Posterior cingulate gyrus (tissue), 11 donors: ENCODE measurements at regions of chr19 and their contacts with region 1.

Region 1: GRCh38 chr19:42450314-42450934 is 7.7 kb upstream of the CXCL17 start:
- DNase-seq: peak in 8 of 10 donors; percentile 18 to 92 (median 70)

Region 2: DNA sequence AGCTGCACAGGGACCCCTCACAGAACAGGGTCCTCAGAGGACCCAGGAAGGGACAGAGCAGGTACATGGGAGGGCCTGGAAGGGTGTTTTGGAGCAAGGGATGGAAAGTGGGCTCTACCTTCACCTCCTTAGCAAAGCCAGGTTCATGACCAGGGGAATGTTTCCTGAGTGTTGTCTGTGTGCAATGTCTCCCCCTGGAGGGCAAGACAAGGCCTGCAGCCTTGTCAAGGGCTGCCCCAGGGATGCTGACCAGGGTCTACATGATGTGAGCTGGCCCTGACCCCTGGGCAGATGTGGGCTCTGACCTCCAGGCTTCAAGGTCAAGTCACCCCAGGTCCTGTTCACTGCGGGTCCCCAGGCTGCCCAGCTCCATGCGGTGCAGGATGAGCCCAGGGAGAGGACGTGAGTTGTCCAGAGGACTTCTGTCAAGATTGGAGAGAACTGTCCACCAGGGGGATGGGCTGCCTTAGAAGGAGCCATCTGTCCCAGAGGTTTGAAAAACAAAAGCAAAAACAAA is 78.9 kb after region 1 on chr19:
- intact Hi-C with region 1: loop called (anchors 1 kb)
- DNase-seq: peak in 6 of 10 donors; percentile 57 to 94 (median 78)